Astrocyte of the cerebellum (primary cell): ENCODE measurements at regions of chr17 and their contacts with region 1.

Region 1: DNA sequence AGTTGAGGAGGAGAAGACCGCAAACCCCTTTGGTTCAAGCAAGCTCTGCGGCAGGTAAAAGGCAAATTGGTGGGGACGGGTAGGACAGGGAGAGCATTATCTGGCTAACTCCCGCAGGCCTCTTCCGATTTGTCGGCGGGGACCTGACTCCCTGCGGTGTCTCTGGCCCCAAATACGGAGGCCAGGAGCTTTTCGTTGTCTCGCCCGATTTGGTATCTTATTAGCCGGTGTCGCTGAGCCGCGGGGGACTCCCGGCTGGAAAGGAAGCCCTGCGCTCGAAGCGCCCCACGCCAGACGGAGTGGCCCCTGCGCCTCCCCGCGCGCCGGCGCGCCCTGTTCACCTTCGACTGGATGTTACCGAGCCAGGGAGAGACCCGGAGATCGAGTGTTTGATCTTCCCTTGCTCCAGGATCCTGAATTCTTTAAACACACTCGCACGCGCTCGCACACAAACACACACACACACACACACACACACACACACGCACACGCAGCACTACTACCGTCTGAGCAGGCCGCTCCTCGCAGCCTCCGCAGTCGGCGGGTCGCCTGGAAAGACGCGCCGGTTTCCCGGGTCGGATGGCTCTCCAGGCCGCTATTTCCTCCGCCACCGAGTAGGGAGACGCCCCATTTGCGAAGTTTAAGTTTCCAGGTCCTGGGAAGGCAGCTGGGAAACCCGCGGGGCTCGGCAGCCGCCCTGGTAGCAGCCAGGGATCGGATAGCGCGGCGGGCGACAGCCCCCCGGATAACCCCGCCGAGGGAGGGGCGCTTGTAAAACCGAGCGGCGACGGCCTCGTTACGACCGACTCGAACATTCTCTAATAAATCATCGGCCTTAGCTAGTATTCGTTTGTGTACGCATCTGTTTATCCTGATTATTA is 3.3 kb downstream of the PRAC1 start:
- DNase-seq: no peak
- H3K4me3 ChIP-seq: no peak overlapping the region
- CTCF ChIP-seq: no peak

Region 2: GRCh38 chr17:48760411-48760810 is 41.4 kb after region 1 on chr17:
- in situ Hi-C with region 1: loop called (anchors 5 kb)
- DNase-seq: no peak
- H3K4me3 ChIP-seq: no peak overlapping the region
- CTCF ChIP-seq: no peak